Right cardiac atrium (tissue), 5 donors: ENCODE measurements at regions of chr14 and their contacts with region 1.

Region 1: DNA sequence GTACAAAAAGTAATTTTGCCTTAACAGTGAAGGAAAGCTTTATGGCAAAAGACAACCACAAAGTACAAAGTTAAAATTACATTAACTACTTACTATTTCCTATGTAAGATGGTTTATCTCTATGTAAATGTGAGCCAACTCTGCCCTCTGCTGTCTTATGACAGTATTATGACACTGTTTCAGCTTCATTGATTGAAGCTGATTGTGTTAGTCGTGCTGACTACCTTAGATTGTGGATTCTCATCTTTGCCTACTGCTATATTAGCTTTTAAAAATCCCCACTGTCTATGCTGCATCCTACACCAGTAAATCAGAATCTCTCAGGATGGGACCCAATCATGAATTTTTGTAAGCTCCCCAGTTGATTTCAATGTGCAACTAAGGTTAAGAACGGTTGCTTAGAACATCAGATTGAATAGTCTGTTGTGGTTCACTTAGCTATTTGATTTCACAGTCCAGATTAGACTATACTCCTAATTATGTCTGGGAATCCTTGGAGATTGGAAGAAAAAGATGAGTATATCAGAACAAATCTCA is 12.2 kb upstream of the SPTB start:
- DNase-seq: no peak
- ATAC-seq: peak; percentile 41 to 71
- H3K4me3 ChIP-seq: no peak overlapping the region
- H3K27ac ChIP-seq: no peak overlapping the region
- H3K4me1 ChIP-seq: no peaks in the 10 kb centered on the region
- H3K27me3 ChIP-seq: no peaks in the 10 kb centered on the region

Region 2: DNA sequence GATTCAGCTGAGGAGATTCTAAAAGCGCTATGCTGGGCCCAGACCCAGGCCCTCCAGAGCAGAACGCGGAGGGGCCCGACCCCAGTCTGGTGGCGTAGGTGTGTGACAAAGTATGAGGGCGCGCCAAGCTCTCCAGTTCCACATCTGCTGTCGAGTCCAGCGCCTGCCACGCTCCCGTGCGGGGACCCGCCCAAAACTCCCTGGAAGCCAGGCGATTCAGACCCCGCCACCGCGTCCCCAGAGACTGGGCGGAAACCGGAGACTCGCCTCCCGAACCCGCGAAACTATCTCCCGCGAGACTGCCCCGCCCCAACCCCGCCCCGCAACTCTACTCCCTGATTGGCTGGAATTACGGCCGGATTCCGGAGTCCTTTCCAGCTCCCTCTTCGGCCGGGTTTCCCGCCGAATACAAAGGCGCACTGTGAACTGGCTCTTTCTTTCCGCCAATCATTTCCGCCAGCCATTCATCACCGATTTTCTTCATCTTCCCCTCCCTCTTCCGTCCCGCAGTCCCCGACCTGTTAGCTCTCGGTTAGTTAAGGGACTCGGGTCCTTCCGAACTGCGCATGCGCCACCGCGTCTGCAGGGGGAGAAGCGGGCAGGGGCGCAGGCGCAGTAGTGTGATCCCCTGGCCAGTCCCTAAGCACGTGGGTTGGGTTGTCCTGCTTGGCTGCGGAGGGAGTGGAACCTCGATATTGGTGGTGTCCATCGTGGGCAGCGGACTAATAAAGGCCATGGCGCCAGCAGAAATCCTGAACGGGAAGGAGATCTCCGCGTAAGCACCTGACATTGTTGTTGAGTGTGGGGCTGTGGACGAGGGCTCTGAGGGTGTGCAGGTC is 504.0 kb before region 1 on chr14 and contains the start of gene MTHFD1:
- intact Hi-C with region 1: no loop called
- DNase-seq: peak; percentile 100
- ATAC-seq: peak; percentile 95 to 96
- H3K4me3 ChIP-seq: peak within 1 kb of the TSS; percentile 43
- H3K27ac ChIP-seq: peak within 1 kb of the TSS; percentile 75
- H3K4me1 ChIP-seq: no peaks in the 10 kb centered on the region
- H3K27me3 ChIP-seq: no peaks in the 10 kb centered on the region
- total RNA-seq, gene MTHFD1: 52.3 to 64.7 (median 56.4) TPM

Region 3: GRCh38 chr14:64663174-64663573 is 228.7 kb before region 1 on chr14:
- intact Hi-C with region 1: loop called in 1 of 4 experiments (anchors 10 kb)
- DNase-seq: no peak
- ATAC-seq: no peak
- H3K4me3 ChIP-seq: no peak overlapping the region
- H3K27ac ChIP-seq: no peak overlapping the region
- H3K4me1 ChIP-seq: no peaks in the 10 kb centered on the region
- H3K27me3 ChIP-seq: no peaks in the 10 kb centered on the region

Region 4: DNA sequence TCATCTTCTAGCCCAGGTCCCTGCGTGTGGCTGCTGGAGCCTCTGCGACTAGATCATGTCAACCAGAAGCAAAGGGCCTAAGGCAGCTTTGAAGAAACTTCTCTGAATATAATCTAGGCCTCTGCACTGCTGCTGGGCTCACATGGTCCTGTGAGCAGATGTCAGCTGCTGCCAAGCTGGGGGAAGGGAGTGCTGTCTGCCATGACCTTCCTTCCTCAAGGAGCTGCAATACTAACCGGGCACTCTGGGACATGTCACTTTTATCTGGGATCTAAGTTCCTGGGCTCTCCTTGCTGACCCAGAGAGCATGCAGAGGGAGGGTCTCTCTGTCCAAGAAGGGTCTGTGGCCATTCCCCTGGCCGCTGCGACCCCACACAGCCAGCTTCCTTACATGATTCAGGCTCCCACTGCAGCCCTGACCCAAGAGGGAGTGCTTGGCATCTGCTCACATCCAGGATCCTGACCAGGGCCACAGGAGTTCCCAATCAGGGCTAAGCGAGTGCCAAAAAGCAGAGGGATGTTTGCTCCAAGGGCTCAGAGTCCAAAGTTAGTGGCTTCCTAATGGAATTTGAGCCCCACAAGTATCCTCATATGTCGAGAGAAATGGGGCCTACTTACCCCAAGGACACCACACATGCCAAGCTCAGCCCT is 113.7 kb before region 1 on chr14:
- intact Hi-C with region 1: no loop called
- DNase-seq: peak in 1 of 3 donors; percentile 66
- ATAC-seq: peak; percentile 55 to 68
- H3K4me3 ChIP-seq: no peak overlapping the region
- H3K27ac ChIP-seq: peak overlapping the region; percentile 76
- H3K4me1 ChIP-seq: peaks cover 10% of the 10 kb centered on the region
- H3K27me3 ChIP-seq: no peaks in the 10 kb centered on the region